ENCODE measurements at regions of chr1 and their contacts with region 1.

Region 1: GRCh38 chr1:43766818-43767525 is 59.6 kb downstream of the ST3GAL3 start:
- DNase-seq: no peak
- ATAC-seq: no peak
- H3K4me3 ChIP-seq: no peak overlapping the region
- H3K27ac ChIP-seq: no peak overlapping the region
- H3K4me1 ChIP-seq: no peaks in the 10 kb centered on the region
- H3K27me3 ChIP-seq: no peaks in the 10 kb centered on the region
- CTCF ChIP-seq: no peak

Region 2: DNA sequence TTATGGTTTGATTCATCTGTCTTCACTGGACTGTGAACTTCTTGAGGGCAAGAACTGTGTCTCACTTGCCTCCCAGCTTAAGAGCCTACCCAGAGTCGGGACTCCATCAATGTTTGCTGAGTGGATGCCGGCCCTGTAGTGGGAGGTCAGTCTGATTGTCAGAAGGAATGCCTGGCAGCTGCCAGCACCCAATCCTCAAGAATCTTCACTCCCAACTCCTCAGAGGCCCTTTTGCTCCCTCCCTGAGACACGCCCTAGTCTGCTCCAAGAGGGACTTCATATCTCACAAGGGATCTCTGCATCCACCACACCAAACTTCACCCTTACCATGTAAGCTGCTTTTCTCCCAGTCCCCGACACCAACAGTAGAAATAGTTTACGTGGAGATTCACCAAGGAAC is 132.3 kb before region 1 on chr1:
- intact Hi-C with region 1: no loop called
- DNase-seq: no peak
- ATAC-seq: peak; percentile 83
- H3K4me3 ChIP-seq: no peak overlapping the region
- H3K27ac ChIP-seq: no peak overlapping the region
- H3K4me1 ChIP-seq: no peaks in the 10 kb centered on the region
- H3K27me3 ChIP-seq: no peaks in the 10 kb centered on the region
- CTCF ChIP-seq: no peak

Region 3: DNA sequence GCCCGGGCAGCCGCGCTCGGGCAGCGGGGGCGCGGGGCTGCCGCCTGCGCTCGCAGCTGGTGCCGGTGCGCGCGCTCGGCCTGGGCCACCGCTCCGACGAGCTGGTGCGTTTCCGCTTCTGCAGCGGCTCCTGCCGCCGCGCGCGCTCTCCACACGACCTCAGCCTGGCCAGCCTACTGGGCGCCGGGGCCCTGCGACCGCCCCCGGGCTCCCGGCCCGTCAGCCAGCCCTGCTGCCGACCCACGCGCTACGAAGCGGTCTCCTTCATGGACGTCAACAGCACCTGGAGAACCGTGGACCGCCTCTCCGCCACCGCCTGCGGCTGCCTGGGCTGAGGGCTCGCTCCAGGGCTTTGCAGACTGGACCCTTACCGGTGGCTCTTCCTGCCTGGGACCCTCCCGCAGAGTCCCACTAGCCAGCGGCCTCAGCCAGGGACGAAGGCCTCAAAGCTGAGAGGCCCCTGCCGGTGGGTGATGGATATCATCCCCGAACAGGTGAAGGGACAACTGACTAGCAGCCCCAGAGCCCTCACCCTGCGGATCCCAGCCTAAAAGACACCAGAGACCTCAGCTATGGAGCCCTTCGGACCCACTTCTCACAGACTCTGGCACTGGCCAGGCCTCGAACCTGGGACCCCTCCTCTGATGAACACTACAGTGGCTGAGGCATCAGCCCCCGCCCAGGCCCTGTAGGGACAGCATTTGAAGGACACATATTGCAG is 169.6 kb after region 1 on chr1:
- intact Hi-C with region 1: loop called (anchors 5 kb)
- DNase-seq: peak; percentile 72
- ATAC-seq: peak; percentile 46
- H3K4me3 ChIP-seq: peak overlapping the region; percentile 42
- H3K27ac ChIP-seq: no peak overlapping the region
- H3K4me1 ChIP-seq: peaks cover 23% of the 10 kb centered on the region
- H3K27me3 ChIP-seq: peaks cover 21% of the 10 kb centered on the region
- CTCF ChIP-seq: no peak

Region 4: DNA sequence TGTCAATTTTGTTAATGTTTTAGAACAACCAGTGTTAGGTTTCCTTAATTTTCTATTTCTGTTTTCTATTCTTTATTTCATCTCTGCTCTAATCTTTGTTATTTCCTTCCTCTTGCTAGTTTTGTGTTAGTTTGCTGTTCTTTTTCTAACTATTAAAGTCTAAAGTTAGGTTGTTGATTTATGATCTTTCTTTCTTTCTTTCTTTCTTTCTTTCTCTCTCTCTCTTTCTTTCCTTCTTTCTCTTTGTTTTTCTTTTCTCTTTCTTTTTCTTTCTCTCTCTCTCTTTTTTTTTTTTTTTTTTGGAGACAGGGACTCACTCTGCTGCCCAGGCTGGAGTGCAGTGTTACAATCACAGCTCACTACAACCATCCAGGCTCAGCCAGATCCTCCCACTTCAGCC is 391.9 kb after region 1 on chr1:
- intact Hi-C with region 1: no loop called
- DNase-seq: no peak
- ATAC-seq: no peak
- H3K4me3 ChIP-seq: no peak overlapping the region
- H3K27ac ChIP-seq: no peak overlapping the region
- H3K4me1 ChIP-seq: no peaks in the 10 kb centered on the region
- H3K27me3 ChIP-seq: no peaks in the 10 kb centered on the region
- CTCF ChIP-seq: no peak